Ascending aorta (tissue), 2 donors: ENCODE measurements at regions of chr6 and their contacts with region 1.

Region 1: GRCh38 chr6:105620878-105621277 is 218.0 kb upstream of the PREP start:
- DNase-seq: no peak
- H3K4me3 ChIP-seq: no peak overlapping the region
- H3K27ac ChIP-seq: no peak overlapping the region
- H3K4me1 ChIP-seq: no peaks in the 10 kb centered on the region
- H3K27me3 ChIP-seq: no peaks in the 10 kb centered on the region
- CTCF ChIP-seq: no peak

Region 2: DNA sequence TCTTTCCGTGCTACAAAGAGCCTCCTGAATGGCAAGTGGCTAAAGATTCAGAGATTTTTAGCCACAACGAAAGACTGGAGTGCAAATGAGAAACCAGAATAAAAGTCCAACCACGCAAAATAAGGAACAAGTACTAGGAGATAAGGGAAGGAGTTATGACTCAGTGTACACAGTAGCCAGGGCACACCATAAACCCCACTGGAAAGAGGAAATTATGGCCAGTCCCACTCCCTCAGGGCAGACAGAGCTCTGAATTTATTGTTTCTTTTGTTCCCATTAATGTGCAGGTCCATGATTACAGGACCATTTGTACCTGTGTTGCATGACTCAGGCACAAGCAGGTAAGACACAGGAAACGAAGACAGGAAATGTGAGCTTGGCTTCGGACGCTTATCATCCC is 67.7 kb before region 1 on chr6:
- intact Hi-C with region 1: loop called (anchors 5 kb)
- DNase-seq: no peak
- H3K4me3 ChIP-seq: no peak overlapping the region
- H3K27ac ChIP-seq: no peak overlapping the region
- H3K4me1 ChIP-seq: no peaks in the 10 kb centered on the region
- H3K27me3 ChIP-seq: no peaks in the 10 kb centered on the region
- CTCF ChIP-seq: no peak